Right cardiac atrium (tissue), 5 donors: ENCODE measurements at regions of chr22 and their contacts with region 1.

Region 1: GRCh38 chr22:40436505-40437451 is 66.4 kb downstream of the SGSM3 start:
- DNase-seq: peak in 1 of 3 donors; percentile 66
- ATAC-seq: peak; percentile 71 to 74
- H3K4me3 ChIP-seq: peak overlapping the region; percentile 12
- H3K27ac ChIP-seq: peak overlapping the region; percentile 93
- H3K4me1 ChIP-seq: peaks cover 5% of the 10 kb centered on the region
- H3K27me3 ChIP-seq: no peaks in the 10 kb centered on the region

Region 2: GRCh38 chr22:40024201-40025061 is 412.3 kb before region 1 on chr22:
- intact Hi-C with region 1: no loop called
- DNase-seq: peak; percentile 68 to 87 (median 83)
- ATAC-seq: peak; percentile 79
- H3K4me3 ChIP-seq: no peak overlapping the region
- H3K27ac ChIP-seq: no peak overlapping the region
- H3K4me1 ChIP-seq: no peaks in the 10 kb centered on the region
- H3K27me3 ChIP-seq: no peaks in the 10 kb centered on the region

Region 3: DNA sequence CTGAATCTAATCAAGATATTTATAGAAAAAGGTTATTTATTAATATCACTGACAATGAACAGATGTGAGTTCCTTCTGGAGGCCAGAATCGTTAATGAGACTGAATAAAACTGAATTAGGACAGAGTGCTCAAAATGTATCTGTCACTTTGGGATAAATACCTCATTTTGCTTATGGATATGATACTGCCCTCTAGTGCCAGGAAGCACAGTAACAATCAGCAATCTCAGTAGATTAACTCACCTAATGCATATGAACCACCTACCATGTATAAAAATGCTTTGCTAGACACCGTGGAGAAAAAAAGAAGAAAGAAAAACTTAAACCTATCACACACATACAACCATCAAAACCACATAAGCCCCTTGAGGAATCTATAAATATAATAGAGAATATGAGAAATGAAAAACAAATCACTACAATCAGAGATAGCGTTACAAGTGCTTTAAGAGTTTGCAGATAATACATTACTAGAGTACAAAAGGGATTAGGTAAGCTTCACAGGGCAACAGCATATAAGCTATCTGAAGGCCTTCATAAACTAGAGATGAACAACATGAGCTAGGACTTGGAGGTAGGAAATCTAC is 51.0 kb after region 1 on chr22:
- intact Hi-C with region 1: loop called in 3 of 4 experiments (anchors 10 kb)
- DNase-seq: no peak
- ATAC-seq: no peak
- H3K4me3 ChIP-seq: no peak overlapping the region
- H3K27ac ChIP-seq: no peak overlapping the region
- H3K4me1 ChIP-seq: peaks cover 8% of the 10 kb centered on the region
- H3K27me3 ChIP-seq: no peaks in the 10 kb centered on the region

Region 4: DNA sequence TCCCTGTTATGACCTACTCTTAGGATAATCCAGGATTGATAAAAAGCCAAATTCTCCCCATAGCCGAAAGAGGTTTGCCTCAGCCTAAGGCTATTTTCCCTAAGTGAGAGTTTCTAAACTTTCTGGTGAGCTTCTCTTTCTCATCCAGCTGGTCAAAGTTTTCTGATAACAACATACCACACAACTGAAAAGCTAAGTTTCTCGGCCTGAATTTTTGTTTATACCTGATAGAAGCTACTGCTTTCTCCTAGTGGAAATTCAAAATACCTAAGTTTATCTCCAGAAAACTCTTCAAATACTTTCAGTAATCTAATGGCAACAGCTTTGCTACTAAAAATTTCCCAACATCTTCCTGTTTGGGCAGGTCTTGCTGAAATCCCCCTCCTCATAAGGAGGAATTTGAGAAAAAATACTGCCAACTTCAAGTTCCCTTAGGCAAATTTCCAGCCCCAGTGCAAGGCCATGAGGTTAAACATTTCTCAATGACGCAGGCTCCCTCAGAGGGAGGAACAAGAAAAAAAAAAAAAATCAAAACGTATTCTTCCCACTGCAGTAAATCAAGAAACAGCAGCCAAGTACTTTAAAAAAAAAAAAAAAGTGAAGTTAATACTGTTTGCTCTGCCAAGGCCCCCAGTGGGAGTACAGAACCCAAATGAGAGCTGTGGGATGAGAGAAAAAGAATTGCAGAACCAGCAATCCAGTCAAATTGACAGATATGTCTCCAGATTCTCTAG is 72.8 kb after region 1 on chr22:
- intact Hi-C with region 1: loop called in 1 of 4 experiments (anchors 10 kb)
- DNase-seq: peak; percentile 67 to 87 (median 70)
- ATAC-seq: peak; percentile 75 to 83
- H3K4me3 ChIP-seq: no peak overlapping the region
- H3K27ac ChIP-seq: no peak overlapping the region
- H3K4me1 ChIP-seq: peaks cover 2% of the 10 kb centered on the region
- H3K27me3 ChIP-seq: no peaks in the 10 kb centered on the region

Region 5: DNA sequence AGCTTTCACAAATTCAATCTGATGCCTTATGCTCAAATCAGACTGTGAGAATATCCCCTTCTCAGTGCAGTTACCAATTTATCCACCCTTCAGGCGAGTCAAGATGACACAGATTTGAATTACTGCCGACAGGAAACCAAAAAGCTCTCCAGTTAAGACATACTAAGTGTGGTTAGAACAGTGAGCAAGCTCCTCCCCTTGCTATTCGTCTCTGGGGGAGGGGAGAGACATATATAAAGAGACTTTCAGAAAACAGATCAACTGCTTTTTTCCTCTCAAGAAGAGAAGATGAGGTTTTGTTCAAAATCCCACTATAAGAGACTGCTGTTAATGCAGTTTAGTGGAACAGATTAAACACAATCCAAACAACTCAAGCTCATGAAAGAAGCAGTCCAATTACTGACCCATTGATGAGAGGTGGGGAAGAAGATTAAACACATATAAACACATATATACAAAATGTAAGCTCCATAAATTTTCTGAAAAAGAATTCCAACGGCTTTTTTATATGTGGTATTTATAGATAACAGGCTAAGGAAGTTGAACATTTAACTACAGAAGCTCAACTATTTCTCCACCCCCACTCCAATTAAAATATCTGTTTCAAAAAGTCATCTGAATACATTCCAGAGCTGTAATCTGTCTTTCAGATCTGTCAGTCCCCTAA is 97.1 kb after region 1 on chr22:
- intact Hi-C with region 1: no loop called
- DNase-seq: no peak
- ATAC-seq: peak; percentile 69 to 71
- H3K4me3 ChIP-seq: peak overlapping the region; percentile 62
- H3K27ac ChIP-seq: no peak overlapping the region
- H3K4me1 ChIP-seq: peaks cover 2% of the 10 kb centered on the region
- H3K27me3 ChIP-seq: no peaks in the 10 kb centered on the region

Region 6: GRCh38 chr22:40636380-40637182 is 199.8 kb after region 1 on chr22 and contains the start of gene MRTFA:
- intact Hi-C with region 1: loop called in 1 of 4 experiments (anchors 5 kb)
- DNase-seq: peak; percentile 100
- ATAC-seq: peak; percentile 98
- H3K4me3 ChIP-seq: peak within 1 kb of the TSS; percentile 81
- H3K27ac ChIP-seq: peak within 1 kb of the TSS; percentile 86
- H3K4me1 ChIP-seq: peaks cover 4% of the 10 kb centered on the region
- H3K27me3 ChIP-seq: no peaks in the 10 kb centered on the region
- total RNA-seq, gene MRTFA: 29.3 to 40.2 (median 31.8) TPM

Region 7: GRCh38 chr22:40645579-40646197 is 208.9 kb after region 1 on chr22:
- intact Hi-C with region 1: loop called (anchors 2 to 5 kb)
- DNase-seq: no peak
- ATAC-seq: no peak
- H3K4me3 ChIP-seq: no peak overlapping the region
- H3K27ac ChIP-seq: no peak overlapping the region
- H3K4me1 ChIP-seq: peaks cover 2% of the 10 kb centered on the region
- H3K27me3 ChIP-seq: no peaks in the 10 kb centered on the region

Region 8: GRCh38 chr22:40764763-40765441 is 328.1 kb after region 1 on chr22:
- intact Hi-C with region 1: loop called in 1 of 4 experiments (anchors 5 kb)
- DNase-seq: no peak
- ATAC-seq: no peak
- H3K4me3 ChIP-seq: no peak overlapping the region
- H3K27ac ChIP-seq: no peak overlapping the region
- H3K4me1 ChIP-seq: no peaks in the 10 kb centered on the region
- H3K27me3 ChIP-seq: no peaks in the 10 kb centered on the region